ENCODE measurements at regions of chr1 and their contacts with region 1.

Region 1: DNA sequence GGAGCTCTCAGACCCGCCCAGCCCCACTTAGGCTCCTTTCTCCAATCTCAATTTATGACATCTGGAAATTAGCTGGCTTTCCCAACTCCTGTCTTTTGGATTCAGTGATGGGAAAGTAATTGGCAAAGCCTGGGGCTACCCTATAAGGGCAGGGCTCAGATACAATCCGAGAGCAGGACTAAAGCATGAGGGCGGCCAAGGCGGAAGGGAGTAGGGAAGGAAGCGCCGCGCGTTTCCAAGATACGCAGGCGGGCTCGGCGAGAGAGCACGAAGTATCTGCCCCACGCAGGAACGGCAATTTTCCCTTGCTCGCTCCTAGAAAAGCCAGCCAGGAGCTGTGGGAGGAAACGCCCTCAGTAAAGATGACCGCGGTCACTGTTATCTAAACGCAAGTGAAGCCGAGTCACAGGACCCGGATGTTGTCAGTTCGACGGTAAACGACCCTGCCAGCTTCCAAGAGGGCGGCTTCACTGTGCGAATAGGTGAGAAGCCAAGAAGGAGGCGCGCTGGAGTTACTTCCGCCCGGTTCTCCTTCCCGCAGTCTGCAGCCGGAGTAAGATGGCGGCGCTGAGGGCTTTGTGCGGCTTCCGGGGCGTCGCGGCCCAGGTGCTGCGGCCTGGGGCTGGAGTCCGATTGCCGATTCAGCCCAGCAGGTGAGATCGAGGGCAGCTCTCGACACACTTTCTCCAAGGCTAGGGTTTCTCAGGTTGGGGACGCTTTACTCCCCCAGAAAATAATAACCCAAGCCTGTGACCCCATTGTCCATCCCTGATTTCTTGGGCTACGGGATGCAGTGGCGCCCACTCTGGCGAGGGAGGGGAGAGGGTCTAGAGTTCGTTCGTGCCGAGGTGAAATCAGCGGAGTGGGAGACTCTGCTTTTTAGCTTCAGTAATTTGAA is at the start of gene NDUFS2:
- DNase-seq: peak; percentile 90 to 99 (median 94)
- ATAC-seq: peak; percentile 99
- H3K4me3 ChIP-seq: peak within 1 kb of the TSS; percentile 66
- H3K4me3 Mint-ChIP-seq: peak within 1 kb of the TSS; percentile 99
- H3K27ac ChIP-seq: peak within 1 kb of the TSS; percentile 85 to 86
- H3K27ac Mint-ChIP-seq: peak within 1 kb of the TSS; percentile 95
- H3K4me1 ChIP-seq: peaks cover 47% of the 10 kb centered on the region
- H3K4me1 Mint-ChIP-seq: peaks cover 66% of the 10 kb centered on the region
- H3K27me3 ChIP-seq: no peaks in the 10 kb centered on the region
- H3K27me3 Mint-ChIP-seq: no peaks in the 10 kb centered on the region
- CTCF ChIP-seq: no peak
- total RNA-seq, gene NDUFS2: 49.9 to 55.7 TPM

Region 2: DNA sequence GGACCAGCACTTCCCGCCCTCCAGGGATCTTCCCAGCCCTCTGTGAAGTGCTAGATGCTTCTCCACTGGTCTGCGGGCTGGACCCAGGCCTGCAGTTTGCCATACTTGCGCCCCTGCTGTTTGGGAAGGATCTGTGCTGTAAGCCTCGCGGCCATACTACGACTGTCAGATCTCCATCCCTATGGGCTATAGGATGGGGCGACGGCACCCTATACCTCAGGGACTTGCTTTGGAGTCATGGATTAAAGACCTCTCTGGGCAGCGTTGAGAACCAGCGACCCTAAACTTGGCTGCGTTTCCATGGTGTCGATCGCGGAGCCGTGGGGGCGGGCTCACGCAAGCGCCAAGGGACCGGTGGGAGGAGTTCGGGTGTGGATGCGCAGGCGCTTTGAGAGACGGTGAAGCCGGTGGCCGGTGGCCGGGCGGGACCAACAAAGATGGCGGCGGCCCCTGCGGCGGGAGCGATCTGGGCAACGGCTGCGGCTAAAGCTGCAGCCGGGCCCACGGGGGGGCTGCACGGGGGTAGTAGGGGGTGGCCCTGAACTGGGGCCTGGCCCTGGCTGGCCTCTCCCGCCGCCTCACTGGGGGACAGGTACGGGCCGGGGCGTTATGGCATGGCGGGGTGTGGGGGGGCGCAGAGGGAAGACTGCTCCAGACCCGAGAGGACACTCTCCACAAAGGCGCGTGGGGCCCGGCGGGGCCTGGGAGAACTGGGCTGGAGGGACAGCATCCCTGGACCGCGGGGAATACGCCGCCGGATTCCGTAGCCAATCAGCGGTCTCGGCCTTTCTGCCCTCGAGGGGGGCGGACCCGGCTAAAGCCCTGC is 42.8 kb before region 1 on chr1 and contains the start of gene USP21:
- CTCF ChIA-PET with region 1: interaction called, 12 read pairs
- POLR2A ChIA-PET with region 1: interaction called, 17 read pairs
- intact Hi-C with region 1: no loop called
- DNase-seq: peak; percentile 89 to 96 (median 90)
- ATAC-seq: peak; percentile 97
- H3K4me3 ChIP-seq: peak within 1 kb of the TSS; percentile 98
- H3K4me3 Mint-ChIP-seq: peak within 1 kb of the TSS; percentile 93
- H3K27ac ChIP-seq: peak within 1 kb of the TSS; percentile 70 to 91
- H3K27ac Mint-ChIP-seq: peak within 1 kb of the TSS; percentile 86
- H3K4me1 ChIP-seq: peaks cover 44% of the 10 kb centered on the region
- H3K4me1 Mint-ChIP-seq: peaks cover 80% of the 10 kb centered on the region
- H3K27me3 ChIP-seq: no peaks in the 10 kb centered on the region
- H3K27me3 Mint-ChIP-seq: no peaks in the 10 kb centered on the region
- CTCF ChIP-seq: no peak
- total RNA-seq, gene USP21: 44.4 to 45.6 TPM

Region 3: GRCh38 chr1:161185282-161185682 is 16.8 kb before region 1 on chr1:
- CTCF ChIA-PET with region 1: interaction called, 5 read pairs
- POLR2A ChIA-PET with region 1: interaction called, 67 read pairs
- intact Hi-C with region 1: loop called in 1 of 2 experiments (anchors 1 kb)
- DNase-seq: peak; percentile 59 to 96 (median 74)
- ATAC-seq: peak; percentile 78
- H3K4me3 ChIP-seq: peak overlapping the region; percentile 41
- H3K4me3 Mint-ChIP-seq: peak overlapping the region; percentile 80
- H3K27ac ChIP-seq: peak overlapping the region; percentile 61 to 77
- H3K27ac Mint-ChIP-seq: peak overlapping the region; percentile 97
- H3K4me1 ChIP-seq: peaks cover 90% of the 10 kb centered on the region
- H3K4me1 Mint-ChIP-seq: peaks cover 74% of the 10 kb centered on the region
- H3K27me3 ChIP-seq: no peaks in the 10 kb centered on the region
- H3K27me3 Mint-ChIP-seq: no peaks in the 10 kb centered on the region
- CTCF ChIP-seq: no peak

Region 4: GRCh38 chr1:161314201-161314981 is 112.3 kb after region 1 on chr1 and contains the start of gene SDHC:
- CTCF ChIA-PET with region 1: interaction called, 3 read pairs
- POLR2A ChIA-PET with region 1: interaction called, 23 read pairs
- intact Hi-C with region 1: no loop called
- DNase-seq: peak; percentile 84 to 96 (median 90)
- ATAC-seq: peak; percentile 98
- H3K4me3 ChIP-seq: peak within 1 kb of the TSS; percentile 90
- H3K4me3 Mint-ChIP-seq: peak within 1 kb of the TSS; percentile 98
- H3K27ac ChIP-seq: peak within 1 kb of the TSS; percentile 94 to 97
- H3K27ac Mint-ChIP-seq: peak within 1 kb of the TSS; percentile 100
- H3K4me1 ChIP-seq: peaks cover 18% of the 10 kb centered on the region
- H3K4me1 Mint-ChIP-seq: peaks cover 30% of the 10 kb centered on the region
- H3K27me3 ChIP-seq: no peaks in the 10 kb centered on the region
- H3K27me3 Mint-ChIP-seq: no peaks in the 10 kb centered on the region
- CTCF ChIP-seq: no peak
- total RNA-seq, gene SDHC: 33.0 to 37.2 TPM